ENCODE measurements at regions of chr10 and their contacts with region 1.

Region 1: DNA sequence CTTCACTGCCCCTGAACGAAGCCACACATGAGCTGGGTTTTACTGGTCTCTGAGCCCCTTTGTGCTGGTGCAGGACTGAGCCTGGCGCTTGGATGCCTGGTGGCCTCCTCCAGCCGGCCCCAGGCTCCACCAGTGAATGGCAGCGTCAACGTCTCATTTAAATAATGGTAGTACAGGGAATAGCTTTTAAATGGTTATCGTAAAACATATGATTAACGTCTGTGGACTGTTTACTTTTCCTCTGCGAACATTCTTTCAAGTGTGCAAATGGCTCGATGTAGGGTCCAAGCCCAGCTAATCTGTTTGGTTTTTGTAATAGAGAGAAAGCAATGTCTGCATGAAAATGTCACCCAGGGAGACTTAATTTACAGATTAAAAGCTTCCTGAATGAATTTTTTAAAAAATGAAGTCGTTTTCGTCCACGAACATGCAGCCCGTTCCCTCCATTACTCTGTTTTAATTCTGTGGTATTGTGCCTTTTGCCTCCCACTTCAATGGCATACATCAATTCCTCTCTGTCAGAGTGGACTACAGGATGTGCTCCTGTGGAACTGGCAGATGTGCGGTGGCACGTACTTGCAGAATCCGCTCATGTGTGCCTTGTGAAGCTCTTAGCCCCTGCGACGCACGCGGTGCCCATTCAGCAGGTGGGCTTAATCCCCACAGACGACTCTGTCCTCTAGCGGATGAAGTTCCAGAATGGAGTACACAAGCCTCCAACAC is 192.7 kb downstream of the TCF7L2 start:
- DNase-seq: no peak
- H3K4me3 ChIP-seq: no peak overlapping the region
- CTCF ChIP-seq: no peak

Region 2: DNA sequence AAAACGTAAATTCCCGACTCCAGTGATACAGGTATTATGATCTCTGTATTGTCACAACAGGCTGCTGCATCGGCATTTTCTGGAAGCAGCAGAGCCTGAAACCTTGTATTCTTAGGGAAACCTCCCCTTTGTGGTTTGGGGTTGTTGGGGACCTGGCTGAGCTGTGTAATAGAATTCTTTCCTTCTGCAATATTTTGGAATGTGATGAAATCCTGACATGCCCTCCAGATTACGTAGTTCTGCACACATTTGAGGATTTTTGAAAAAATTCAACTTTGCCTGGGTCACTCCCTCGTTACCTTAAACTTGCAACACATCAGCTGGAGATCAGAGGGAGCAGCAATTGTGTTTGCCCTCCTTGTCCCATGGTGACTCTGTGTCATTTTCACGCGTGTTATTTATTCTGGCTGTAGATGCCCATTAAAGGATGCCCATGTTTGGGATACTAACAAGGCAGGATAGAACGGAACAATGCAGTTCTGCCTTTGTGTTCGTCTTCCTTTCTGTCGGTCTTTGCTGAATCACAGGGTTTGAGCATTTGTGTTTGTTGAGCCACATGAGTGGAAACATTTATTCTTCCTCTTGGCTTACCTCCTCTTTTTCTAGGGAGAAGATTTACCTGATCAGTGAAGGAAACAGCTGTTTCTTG is 11.0 kb before region 1 on chr10:
- CTCF ChIA-PET with region 1: interaction called, 11 read pairs
- POLR2A ChIA-PET with region 1: no interaction called
- DNase-seq: peak; percentile 55
- H3K4me3 ChIP-seq: no peak overlapping the region
- CTCF ChIP-seq: no peak

Region 3: GRCh38 chr10:113153493-113154102 is 10.8 kb after region 1 on chr10:
- CTCF ChIA-PET with region 1: interaction called, 10 read pairs
- POLR2A ChIA-PET with region 1: no interaction called
- DNase-seq: no peak
- H3K4me3 ChIP-seq: no peak overlapping the region
- CTCF ChIP-seq: no peak

Measured in AG04449 (cell line).